ENCODE measurements at regions of chr5 and their contacts with region 1.

Region 1: DNA sequence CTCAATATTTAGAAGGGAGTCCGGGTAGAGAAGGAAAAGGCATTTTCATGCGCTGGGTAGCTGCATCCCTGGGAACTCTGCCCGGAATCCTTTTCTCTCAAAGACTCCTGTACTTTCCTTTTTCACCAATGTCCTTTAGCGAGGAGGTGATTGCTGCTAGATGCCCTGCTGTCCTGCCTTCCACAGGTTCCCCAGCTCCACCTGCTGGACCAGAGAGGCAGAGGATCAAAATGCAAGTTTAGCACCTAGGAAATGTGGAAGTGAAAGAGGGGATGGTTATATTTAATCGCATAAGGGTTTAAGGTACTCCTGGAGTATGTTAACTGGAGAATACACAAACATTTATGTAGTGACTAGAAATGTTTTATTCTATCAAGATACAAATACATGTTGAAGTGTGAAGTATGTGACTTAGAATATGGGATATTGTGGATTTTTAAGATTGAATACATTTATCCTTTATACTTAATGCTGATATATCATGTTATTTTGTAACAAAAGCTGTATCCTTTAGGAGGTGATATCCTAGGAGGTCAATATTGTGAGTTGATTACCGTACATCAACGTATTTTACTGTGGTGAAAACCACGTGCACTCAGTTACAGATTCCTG is 145.7 kb downstream of the ARHGAP26 start:
- DNase-seq: peak; percentile 38 to 66
- H3K4me3 ChIP-seq: no peak overlapping the region
- H3K27ac ChIP-seq: no peak overlapping the region
- H3K4me1 ChIP-seq: no peaks in the 10 kb centered on the region
- H3K27me3 ChIP-seq: no peaks in the 10 kb centered on the region
- CTCF ChIP-seq: peak; percentile 76 to 89 (median 85)
- EP300 ChIP-seq: no peak
- POLR2A ChIP-seq: no peak
- RAD21 ChIP-seq: peak; percentile 75 to 83

Region 2: GRCh38 chr5:142611154-142611553 is 304.8 kb before region 1 on chr5:
- CTCF ChIA-PET with region 1: no interaction called
- POLR2A ChIA-PET with region 1: no interaction called
- DNase-seq: peak; percentile 49 to 93
- H3K4me3 ChIP-seq: no peak overlapping the region
- H3K27ac ChIP-seq: no peak overlapping the region
- H3K4me1 ChIP-seq: no peaks in the 10 kb centered on the region
- H3K27me3 ChIP-seq: no peaks in the 10 kb centered on the region
- CTCF ChIP-seq: peak; percentile 78 to 94 (median 90)
- EP300 ChIP-seq: no peak
- POLR2A ChIP-seq: no peak
- RAD21 ChIP-seq: peak; percentile 92 to 94

Region 3: DNA sequence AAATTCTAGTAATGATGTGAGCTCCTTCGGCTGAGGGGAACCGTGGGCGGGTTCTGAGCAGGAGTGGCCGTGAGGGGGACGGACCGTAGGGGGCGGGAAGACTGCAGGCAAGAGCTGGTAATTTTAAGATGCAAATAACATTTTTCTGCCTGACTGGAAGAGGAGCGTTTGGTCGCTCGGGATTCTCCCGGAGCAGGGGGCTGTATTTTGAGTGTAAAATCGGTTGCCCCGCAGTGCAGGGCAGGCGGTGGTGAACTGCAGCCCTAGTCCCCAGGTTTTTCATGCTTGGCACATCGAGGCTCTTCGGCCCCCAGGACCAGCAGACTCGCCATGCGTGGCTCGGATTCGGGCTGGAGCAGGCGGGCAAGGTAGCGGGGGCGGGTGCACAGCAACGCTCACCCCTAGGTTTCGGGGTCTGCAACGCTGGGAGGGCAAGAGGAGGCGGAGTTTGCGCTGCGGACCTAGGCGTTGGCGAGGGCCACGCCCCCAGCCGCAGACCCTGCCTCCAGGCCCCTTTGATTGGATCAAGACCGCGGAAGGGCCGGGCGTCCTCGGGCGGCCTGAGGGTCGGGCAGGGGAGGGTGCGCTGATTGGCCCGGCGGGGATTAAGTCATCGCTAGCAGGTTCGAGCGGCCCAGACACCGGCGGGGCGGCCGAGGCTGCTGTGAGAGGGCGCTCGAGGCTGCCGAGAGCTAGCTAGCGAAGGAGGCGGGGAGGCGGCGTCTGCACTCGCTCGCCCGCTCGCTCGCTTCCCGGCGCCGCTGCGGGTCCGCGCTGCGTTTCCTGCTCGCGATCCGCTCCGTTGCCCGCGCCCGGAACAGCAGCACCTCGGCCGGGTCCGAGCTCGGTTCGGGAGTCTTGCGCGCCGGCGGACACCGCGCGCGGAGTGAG is 145.9 kb before region 1 on chr5 and contains the start of gene ARHGAP26:
- CTCF ChIA-PET with region 1: interaction called, 14 read pairs
- POLR2A ChIA-PET with region 1: no interaction called
- DNase-seq: peak; percentile 93 to 94
- H3K4me3 ChIP-seq: peak within 1 kb of the TSS; percentile 77 to 91 (median 83)
- H3K27ac ChIP-seq: no peak within 1 kb of the TSS; the same call in 1 of the 2 replicates
- H3K4me1 ChIP-seq: peaks cover 0 to 10% (median 5%) of the 10 kb centered on the region in 4 experiments; a peak in 6 of 7 replicates
- H3K27me3 ChIP-seq: peaks cover 0 to 8% (median 2%) of the 10 kb centered on the region in 4 experiments; a peak in 4 of 7 replicates
- CTCF ChIP-seq: peak in 2 of 3 experiments; percentile 16 to 17; a peak in 3 of 4 replicates
- EP300 ChIP-seq: no peak
- POLR2A ChIP-seq: peak; percentile 85 to 87
- RAD21 ChIP-seq: peak; percentile 11 to 25; a peak in 2 of 4 replicates
- total RNA-seq, gene ARHGAP26: 20.6 and 24.8 TPM in 2 replicates

Region 4: GRCh38 chr5:142800776-142801494 is 115.0 kb before region 1 on chr5:
- CTCF ChIA-PET with region 1: no interaction called
- POLR2A ChIA-PET with region 1: no interaction called
- DNase-seq: no peak
- H3K4me3 ChIP-seq: no peak overlapping the region
- H3K27ac ChIP-seq: no peak overlapping the region
- H3K4me1 ChIP-seq: peaks cover 0 to 12% (median 3%) of the 10 kb centered on the region in 4 experiments; a peak in 4 of 7 replicates
- H3K27me3 ChIP-seq: no peaks in the 10 kb centered on the region
- CTCF ChIP-seq: no peak
- EP300 ChIP-seq: no peak
- POLR2A ChIP-seq: no peak
- RAD21 ChIP-seq: no peak

Region 5: DNA sequence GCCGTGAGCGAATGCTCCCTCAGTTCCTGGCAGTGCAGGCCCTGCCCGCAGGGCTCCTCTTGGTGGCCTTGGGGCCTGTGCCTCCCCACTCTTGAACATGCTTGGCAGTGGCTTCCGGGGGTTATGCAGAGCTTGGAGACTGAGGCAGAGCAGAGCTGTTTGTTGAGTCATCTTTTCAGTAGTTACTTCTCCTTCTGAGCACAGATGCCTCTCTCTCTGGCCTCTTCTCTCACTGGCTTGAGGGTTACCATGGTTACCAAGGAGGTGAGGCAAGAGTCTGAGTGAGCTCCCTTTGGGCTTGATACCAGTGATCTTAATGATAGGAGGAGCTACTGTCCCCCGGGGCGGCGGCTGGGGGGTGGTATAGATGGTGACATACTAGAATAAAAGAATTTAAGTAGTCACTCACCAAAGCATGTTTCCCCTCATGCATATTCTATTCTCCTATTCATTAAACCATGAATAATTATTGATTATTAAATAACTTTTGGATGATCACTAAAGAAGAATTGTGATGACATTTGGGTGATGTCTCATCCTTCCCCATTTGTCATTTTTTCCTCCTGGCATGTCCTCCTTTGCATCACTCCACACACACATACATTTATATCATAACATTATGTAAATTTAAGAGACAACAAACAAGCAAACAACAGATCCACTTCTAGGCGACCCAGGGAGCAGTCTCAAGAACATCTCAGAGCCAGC is 34.7 kb before region 1 on chr5:
- CTCF ChIA-PET with region 1: interaction called, 98 read pairs
- POLR2A ChIA-PET with region 1: no interaction called
- DNase-seq: no peak
- H3K4me3 ChIP-seq: peak overlapping the region in 1 of 4 experiments; percentile 29; a peak in 1 of 8 replicates
- H3K27ac ChIP-seq: 0 out of 2 replicates have a peak overlapping the region, but pooled peaks have one; percentile 6
- H3K4me1 ChIP-seq: peaks cover 10 to 22% (median 15%) of the 10 kb centered on the region in 4 experiments
- H3K27me3 ChIP-seq: no peaks in the 10 kb centered on the region
- CTCF ChIP-seq: no peak
- EP300 ChIP-seq: no peak
- POLR2A ChIP-seq: no peak
- RAD21 ChIP-seq: no peak

Region 6: GRCh38 chr5:142900927-142901326 is 15.0 kb before region 1 on chr5:
- CTCF ChIA-PET with region 1: interaction called, 76 read pairs
- POLR2A ChIA-PET with region 1: no interaction called
- DNase-seq: no peak
- H3K4me3 ChIP-seq: no peak overlapping the region
- H3K27ac ChIP-seq: no peak overlapping the region; the same call in 1 of the 2 replicates
- H3K4me1 ChIP-seq: peaks cover 5 to 14% (median 11%) of the 10 kb centered on the region in 4 experiments; a peak in 6 of 7 replicates
- H3K27me3 ChIP-seq: no peaks in the 10 kb centered on the region
- CTCF ChIP-seq: no peak
- EP300 ChIP-seq: no peak
- POLR2A ChIP-seq: no peak
- RAD21 ChIP-seq: no peak

Region 7: DNA sequence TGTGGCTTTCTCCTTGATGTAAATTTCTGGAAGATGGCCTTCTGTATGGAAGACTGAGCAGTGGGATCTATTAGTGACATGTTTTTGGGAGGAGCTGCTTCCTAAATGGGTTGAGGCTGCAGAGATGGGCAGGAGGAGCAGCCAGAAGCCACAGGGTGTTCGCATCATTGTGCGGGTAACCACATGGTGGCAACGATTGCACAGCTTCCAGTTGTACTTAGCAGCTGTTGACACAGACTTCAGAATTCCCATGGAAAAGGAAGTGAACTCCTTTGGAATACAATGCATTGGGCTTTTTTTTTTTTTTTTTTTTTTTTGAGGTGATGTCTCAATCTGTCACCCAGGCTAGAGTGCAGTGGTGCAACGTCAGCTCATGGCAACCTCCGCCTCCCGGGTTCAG is 190.3 kb after region 1 on chr5:
- CTCF ChIA-PET with region 1: no interaction called
- POLR2A ChIA-PET with region 1: no interaction called
- DNase-seq: no peak
- H3K4me3 ChIP-seq: no peak overlapping the region
- H3K27ac ChIP-seq: no peak overlapping the region
- H3K4me1 ChIP-seq: peaks cover 3 to 10% (median 3%) of the 10 kb centered on the region in 4 experiments; a peak in 6 of 7 replicates
- H3K27me3 ChIP-seq: no peaks in the 10 kb centered on the region
- CTCF ChIP-seq: peak; percentile 19 to 33 (median 33)
- EP300 ChIP-seq: no peak
- POLR2A ChIP-seq: no peak
- RAD21 ChIP-seq: peak; percentile 59 to 64

Region 8: DNA sequence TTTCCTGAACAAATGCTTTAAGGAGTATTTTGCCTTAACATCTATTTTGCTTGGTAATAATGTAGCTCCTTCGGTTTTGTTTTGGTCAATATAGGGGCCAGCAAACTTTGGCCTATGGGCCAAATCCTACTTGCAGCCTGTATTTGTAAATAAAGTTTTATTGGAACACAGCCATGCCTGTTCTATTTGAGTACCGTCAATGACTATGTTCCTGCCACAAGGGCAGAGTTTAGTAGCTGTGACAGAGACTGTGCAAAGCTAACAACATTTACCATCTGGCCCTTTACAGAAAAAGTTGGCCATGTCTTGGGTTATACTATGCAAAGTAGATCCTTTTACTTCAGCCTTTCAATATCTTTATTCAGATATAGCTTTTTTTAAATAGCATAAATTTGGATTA is 374.2 kb after region 1 on chr5:
- CTCF ChIA-PET with region 1: no interaction called
- POLR2A ChIA-PET with region 1: no interaction called
- DNase-seq: no peak
- H3K4me3 ChIP-seq: no peak overlapping the region
- H3K27ac ChIP-seq: no peak overlapping the region
- H3K4me1 ChIP-seq: no peaks in the 10 kb centered on the region
- H3K27me3 ChIP-seq: no peaks in the 10 kb centered on the region
- CTCF ChIP-seq: no peak
- EP300 ChIP-seq: no peak
- POLR2A ChIP-seq: no peak
- RAD21 ChIP-seq: no peak

Measured in H1 (cell line).